ENCODE measurements at regions of chr7 and their contacts with region 1.

Region 1: GRCh38 chr7:49483142-49483541 is 290.3 kb upstream of the VWC2 start:
- DNase-seq: peak in 1 of 2 donors; percentile 6
- ATAC-seq: peak in 5 of 8 donors; percentile 67 to 87 (median 76)
- H3K4me3 ChIP-seq: no peak overlapping the region
- H3K27ac ChIP-seq: no peak overlapping the region
- H3K4me1 ChIP-seq: peaks cover 0 to 8% (median 0%) of the 10 kb centered on the region in 9 donors
- H3K27me3 ChIP-seq: no peaks in the 10 kb centered on the region
- CTCF ChIP-seq: peak in 7 of 9 donors; percentile 11 to 60 (median 43)

Region 2: DNA sequence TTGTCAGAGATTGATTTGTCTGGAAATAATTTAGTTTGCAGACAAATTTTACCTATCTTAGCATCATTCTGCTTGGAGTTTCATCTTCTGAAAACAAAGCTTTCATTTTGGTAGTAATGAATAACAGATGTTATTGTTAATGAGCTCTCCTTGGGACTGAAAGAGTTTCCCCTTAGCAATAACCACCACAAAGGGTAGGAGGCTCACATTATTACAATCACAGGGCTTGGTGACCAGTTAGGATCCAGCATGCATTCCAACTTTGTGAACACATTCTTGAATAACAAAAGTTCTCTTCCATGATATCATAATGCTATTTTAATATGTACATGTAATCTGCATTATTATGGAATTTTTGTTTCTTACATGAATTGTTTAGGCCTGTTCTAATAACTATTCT is 141.5 kb after region 1 on chr7:
- intact Hi-C with region 1: loop called in 1 of 10 experiments (anchors 10 kb)
- DNase-seq: no peak
- ATAC-seq: peak in 6 of 8 donors; percentile 42 to 86 (median 74)
- H3K4me3 ChIP-seq: no peak overlapping the region
- H3K27ac ChIP-seq: peak overlapping the region in 7 of 10 donors; percentile 1 to 76 (median 72)
- H3K4me1 ChIP-seq: peaks cover 0 to 37% (median 19%) of the 10 kb centered on the region in 9 donors
- H3K27me3 ChIP-seq: no peaks in the 10 kb centered on the region
- CTCF ChIP-seq: no peak

Region 3: GRCh38 chr7:49766966-49767365 is 283.8 kb after region 1 on chr7:
- intact Hi-C with region 1: loop called in 1 of 10 experiments (anchors 10 kb)
- DNase-seq: no peak
- ATAC-seq: no peak
- H3K4me3 ChIP-seq: no peak overlapping the region
- H3K27ac ChIP-seq: no peak overlapping the region
- H3K4me1 ChIP-seq: no peaks in the 10 kb centered on the region
- H3K27me3 ChIP-seq: peaks cover 0 to 10% (median 0%) of the 10 kb centered on the region in 7 donors
- CTCF ChIP-seq: no peak

Region 4: DNA sequence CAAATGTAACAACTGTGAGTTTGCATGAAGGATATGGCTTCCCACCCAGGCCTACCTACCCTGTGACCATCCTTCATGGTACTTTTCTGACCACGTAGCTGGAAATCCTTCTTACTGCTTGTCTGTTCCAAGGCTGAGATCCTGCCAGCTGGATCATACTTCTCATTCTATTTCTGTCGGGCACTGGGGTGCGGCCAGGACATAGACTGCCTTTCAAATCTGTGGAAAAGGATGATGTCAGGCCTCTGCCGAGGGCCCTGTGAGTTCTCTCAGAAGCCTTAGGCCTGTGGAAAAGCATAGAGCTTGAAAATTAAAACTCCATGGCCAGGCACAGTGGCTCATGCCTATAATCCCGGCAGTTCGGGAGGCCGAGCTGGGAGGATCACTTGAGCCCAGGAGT is 300.3 kb after region 1 on chr7:
- intact Hi-C with region 1: loop called in 3 of 10 experiments (anchors 5 to 10 kb)
- DNase-seq: peak; percentile 53 to 77
- ATAC-seq: peak; percentile 86 to 97 (median 94)
- H3K4me3 ChIP-seq: no peak overlapping the region
- H3K27ac ChIP-seq: peak overlapping the region; percentile 12 to 80 (median 71)
- H3K4me1 ChIP-seq: peaks cover 0 to 49% (median 17%) of the 10 kb centered on the region in 9 donors
- H3K27me3 ChIP-seq: peaks cover 0 to 1% (median 0%) of the 10 kb centered on the region in 7 donors
- CTCF ChIP-seq: no peak

Region 5: GRCh38 chr7:49852619-49853462 is 369.7 kb after region 1 on chr7:
- intact Hi-C with region 1: loop called in 2 of 10 experiments (anchors 5 to 10 kb)
- DNase-seq: peak in 1 of 2 donors; percentile 31
- ATAC-seq: peak; percentile 27 to 81 (median 70)
- H3K4me3 ChIP-seq: no peak overlapping the region
- H3K27ac ChIP-seq: peak overlapping the region in 1 of 10 donors; percentile 9
- H3K4me1 ChIP-seq: peaks cover 0 to 26% (median 3%) of the 10 kb centered on the region in 9 donors
- H3K27me3 ChIP-seq: no peaks in the 10 kb centered on the region
- CTCF ChIP-seq: peak; percentile 37 to 77 (median 69)

Measured in heart right ventricle (tissue), 16 donors.